ENCODE measurements at regions of chr3 and their contacts with region 1.

Region 1: DNA sequence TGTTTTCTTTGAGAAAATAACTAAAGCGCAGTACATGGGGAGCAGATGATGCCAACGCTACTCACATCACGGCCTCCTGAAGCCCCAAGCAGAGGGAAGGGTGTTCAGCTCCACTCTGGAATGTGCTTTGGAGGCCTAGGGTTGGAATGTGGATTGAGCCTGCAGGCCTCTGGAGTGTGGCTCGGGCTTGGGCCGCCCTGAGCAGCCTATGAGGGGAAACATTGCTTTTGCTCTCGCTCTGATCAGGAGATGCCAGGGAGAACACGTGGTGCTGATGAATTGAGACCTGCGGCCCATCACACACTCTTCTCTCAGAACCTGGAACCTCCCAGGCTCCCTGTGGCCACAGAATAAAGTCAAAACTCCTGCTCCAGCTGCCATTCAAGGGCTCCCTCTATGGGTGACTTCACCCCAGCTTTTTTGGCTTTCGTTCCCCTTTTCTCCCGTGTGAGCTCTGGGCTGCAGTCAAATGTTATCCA is 23.3 kb downstream of the CCDC13 start:
- DNase-seq: no peak
- H3K4me3 Mint-ChIP-seq: no peak overlapping the region
- H3K27ac Mint-ChIP-seq: no peak overlapping the region
- H3K4me1 Mint-ChIP-seq: peaks cover 20% of the 10 kb centered on the region
- H3K27me3 Mint-ChIP-seq: peaks cover 5% of the 10 kb centered on the region

Region 2: GRCh38 chr3:42502429-42503250 is 247.2 kb before region 1 on chr3 and contains the start of gene VIPR1:
- intact Hi-C with region 1: loop called (anchors 1 kb)
- DNase-seq: peak; percentile 85
- H3K4me3 Mint-ChIP-seq: peak within 1 kb of the TSS; percentile 86
- H3K27ac Mint-ChIP-seq: no peak within 1 kb of the TSS
- H3K4me1 Mint-ChIP-seq: peaks cover 31% of the 10 kb centered on the region
- H3K27me3 Mint-ChIP-seq: peaks cover 26% of the 10 kb centered on the region
- total RNA-seq, gene VIPR1: 0.69 and 0.88 TPM in 2 replicates

Region 3: GRCh38 chr3:42572278-42572677 is 177.5 kb before region 1 on chr3:
- intact Hi-C with region 1: loop called (anchors 2 kb)
- DNase-seq: no peak
- H3K4me3 Mint-ChIP-seq: no peak overlapping the region
- H3K27ac Mint-ChIP-seq: no peak overlapping the region
- H3K4me1 Mint-ChIP-seq: peaks cover 21% of the 10 kb centered on the region
- H3K27me3 Mint-ChIP-seq: no peaks in the 10 kb centered on the region

Region 4: DNA sequence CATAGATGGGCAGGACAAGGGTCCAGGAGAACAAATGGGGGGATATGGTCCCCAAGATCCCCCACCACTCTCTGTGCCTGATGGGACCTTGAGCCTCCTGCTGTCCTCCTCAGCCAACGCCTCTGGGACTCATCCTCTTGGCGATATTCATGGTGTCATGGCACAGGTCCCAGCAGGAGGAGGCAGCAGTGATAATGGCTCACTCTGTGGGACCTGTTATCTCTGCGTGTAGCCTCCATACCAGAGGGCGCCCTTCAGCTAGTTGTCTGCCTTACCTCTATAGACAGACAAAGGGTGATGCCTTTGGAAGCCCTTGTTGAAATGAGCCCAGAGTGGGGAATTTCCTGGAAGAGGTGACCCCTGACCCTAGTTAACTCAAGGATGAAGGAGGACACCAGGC is 88.9 kb before region 1 on chr3:
- intact Hi-C with region 1: loop called (anchors 1 kb)
- DNase-seq: no peak
- H3K4me3 Mint-ChIP-seq: no peak overlapping the region
- H3K27ac Mint-ChIP-seq: no peak overlapping the region
- H3K4me1 Mint-ChIP-seq: no peaks in the 10 kb centered on the region
- H3K27me3 Mint-ChIP-seq: peaks cover 3% of the 10 kb centered on the region

Region 5: DNA sequence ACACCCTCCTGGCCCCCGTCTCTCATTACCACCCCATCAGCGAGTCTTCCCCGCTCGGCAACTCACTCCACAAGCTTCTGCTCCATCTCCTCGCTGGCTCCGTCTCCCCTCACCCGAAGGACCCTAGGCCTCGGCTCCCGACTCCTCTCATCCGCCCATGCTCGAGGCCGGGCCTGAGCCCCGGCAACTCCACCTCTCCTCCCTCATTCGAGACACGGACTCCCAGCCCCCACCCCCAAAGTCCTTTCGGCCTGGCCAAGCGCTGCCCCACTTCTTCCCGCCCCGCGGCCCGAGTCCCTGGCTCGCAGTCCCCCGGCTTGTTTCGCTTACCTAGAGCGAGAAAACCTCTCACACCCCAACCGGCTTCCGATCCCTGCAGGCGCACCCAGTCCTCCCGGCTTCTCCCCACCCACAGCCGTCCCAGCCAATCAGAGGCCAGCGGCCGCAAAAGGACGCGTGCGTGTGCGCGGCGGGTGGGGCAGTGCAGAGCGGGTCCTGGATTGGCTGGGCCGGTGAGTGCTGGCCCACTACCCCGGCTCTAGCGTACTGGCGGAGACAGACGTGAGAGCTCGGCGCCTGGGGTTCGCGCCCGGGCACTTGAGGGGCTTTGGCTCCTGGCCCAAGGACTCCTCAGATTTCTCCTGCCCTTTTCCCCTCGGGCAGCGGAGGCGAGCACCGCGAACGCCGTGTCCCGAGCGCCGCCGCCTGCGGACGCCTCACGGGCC is 54.5 kb after region 1 on chr3 and contains the start of gene HIGD1A:
- intact Hi-C with region 1: no loop called
- DNase-seq: peak; percentile 92
- H3K4me3 Mint-ChIP-seq: peak within 1 kb of the TSS; percentile 99
- H3K27ac Mint-ChIP-seq: peak within 1 kb of the TSS; percentile 90
- H3K4me1 Mint-ChIP-seq: peaks cover 43% of the 10 kb centered on the region
- H3K27me3 Mint-ChIP-seq: peaks cover 27% of the 10 kb centered on the region
- total RNA-seq, gene HIGD1A: 90.1 and 97.5 TPM in 2 replicates